ENCODE measurements at regions of chr5 and their contacts with region 1.

Region 1: DNA sequence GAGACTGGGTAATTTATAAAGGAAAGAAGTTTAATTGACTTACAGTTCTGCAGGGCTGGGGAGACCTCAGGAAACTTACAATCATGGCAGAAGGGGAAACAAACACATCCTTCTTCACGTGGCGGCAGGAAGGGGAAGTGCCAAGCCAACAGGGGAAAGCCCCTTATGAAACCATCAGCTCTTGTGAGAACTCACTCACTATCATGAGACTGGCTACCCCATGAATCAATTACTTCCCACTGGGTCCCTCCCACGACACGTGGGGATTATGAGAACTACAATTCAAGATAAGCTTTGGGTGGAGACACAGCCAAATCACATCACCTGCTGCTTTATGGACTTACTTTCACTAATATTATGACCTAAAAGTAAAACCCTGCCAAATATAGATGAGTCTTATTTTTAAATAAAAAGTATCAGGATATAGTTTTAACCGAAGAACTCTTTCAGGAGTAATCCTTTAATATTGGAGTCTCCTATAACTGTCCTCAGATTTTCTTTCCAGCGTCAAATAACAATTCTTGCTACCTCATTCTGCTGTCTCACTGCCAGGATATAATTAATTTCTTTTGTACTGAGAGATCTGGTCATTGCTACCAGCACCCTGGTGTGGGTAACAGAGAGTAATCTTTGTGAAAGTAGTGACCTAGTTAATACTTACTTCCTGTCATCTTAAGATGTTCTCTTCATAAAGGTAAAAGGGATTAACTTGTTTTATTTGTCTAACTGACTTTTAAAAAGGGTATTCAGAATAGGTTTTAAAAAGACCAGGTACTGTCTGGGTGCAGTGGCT is 68.6 kb downstream of the NLN start:
- DNase-seq: no peak
- CTCF ChIP-seq: no peak

Region 2: GRCh38 chr5:65695162-65695755 is 95.3 kb before region 1 on chr5:
- CTCF ChIA-PET with region 1: no interaction called
- POLR2A ChIA-PET with region 1: no interaction called
- DNase-seq: peak; percentile 31
- CTCF ChIP-seq: no peak

Region 3: GRCh38 chr5:65779643-65780042 is 10.9 kb before region 1 on chr5:
- CTCF ChIA-PET with region 1: interaction called, 12 read pairs
- POLR2A ChIA-PET with region 1: no interaction called
- DNase-seq: peak; percentile 14
- CTCF ChIP-seq: no peak